ENCODE measurements at regions of chr16 and their contacts with region 1.

Region 1: DNA sequence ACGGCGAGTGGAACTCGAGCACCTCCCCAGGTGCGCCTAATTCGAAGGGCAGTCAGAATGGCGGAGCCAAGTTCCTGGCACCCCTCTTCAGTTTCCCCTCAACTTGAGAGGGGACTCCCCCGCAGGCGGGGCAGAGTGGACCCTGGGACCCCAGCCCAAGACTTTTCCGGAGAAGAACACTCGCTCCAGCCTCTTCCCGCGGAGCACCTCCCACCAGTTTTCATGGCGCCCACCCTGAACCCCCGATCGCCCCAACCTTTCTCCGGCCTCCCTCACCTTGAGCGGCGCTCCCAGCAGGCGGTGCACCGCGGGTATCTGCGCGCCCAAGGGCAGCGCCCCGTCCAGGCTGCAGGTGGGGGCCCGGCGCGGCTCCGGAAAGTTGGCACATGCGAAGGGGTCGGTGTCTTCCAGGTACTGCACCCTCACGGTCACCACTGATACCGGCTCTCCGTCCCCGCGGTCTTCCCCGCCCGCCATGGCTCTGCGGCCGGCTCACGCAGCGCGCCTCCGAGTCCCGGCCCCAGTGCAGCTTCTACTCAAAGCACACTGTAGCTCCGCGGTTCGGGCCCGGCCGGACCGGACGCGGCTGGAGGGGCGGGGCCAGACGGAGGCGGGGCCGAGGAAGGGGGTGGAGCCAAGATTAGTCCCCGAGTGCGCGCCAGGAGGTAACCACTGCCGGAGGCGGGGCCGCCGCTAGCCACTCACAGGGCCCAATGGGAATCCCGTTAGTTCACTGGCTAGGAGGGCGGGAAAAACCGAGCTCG is at the start of gene FHOD1:
- DNase-seq: peak; percentile 52
- H3K4me3 ChIP-seq: peak within 1 kb of the TSS; percentile 78
- CTCF ChIP-seq: no peak

Region 2: GRCh38 chr16:67159593-67160406 is 87.3 kb before region 1 on chr16 and contains the starts of genes FBXL8 and TRADD:
- CTCF ChIA-PET with region 1: no interaction called
- POLR2A ChIA-PET with region 1: no interaction called
- DNase-seq: no peak
- H3K4me3 ChIP-seq: peak within 1 kb of the TSS; percentile 93
- CTCF ChIP-seq: peak; percentile 34

Region 3: GRCh38 chr16:67226804-67227557 is 20.1 kb before region 1 on chr16 and contains the start of gene TMEM208:
- CTCF ChIA-PET with region 1: interaction called, 8 read pairs
- POLR2A ChIA-PET with region 1: interaction called, 12 read pairs
- DNase-seq: peak; percentile 84
- H3K4me3 ChIP-seq: peak within 1 kb of the TSS; percentile 98
- CTCF ChIP-seq: peak; percentile 38

Region 4: GRCh38 chr16:67296422-67296821 is 49.3 kb after region 1 on chr16:
- CTCF ChIA-PET with region 1: no interaction called
- POLR2A ChIA-PET with region 1: no interaction called
- DNase-seq: no peak
- H3K4me3 ChIP-seq: no peak overlapping the region
- CTCF ChIP-seq: no peak